AG04450 (cell line): ENCODE measurements at regions of chr10 and their contacts with region 1.

Region 1: GRCh38 chr10:13776861-13777311 is 190.1 kb downstream of the PRPF18 start:
- DNase-seq: no peak
- H3K4me3 ChIP-seq: no peak overlapping the region
- H3K27ac ChIP-seq: no peak overlapping the region
- H3K27me3 ChIP-seq: no peaks in the 10 kb centered on the region
- CTCF ChIP-seq: no peak

Region 2: DNA sequence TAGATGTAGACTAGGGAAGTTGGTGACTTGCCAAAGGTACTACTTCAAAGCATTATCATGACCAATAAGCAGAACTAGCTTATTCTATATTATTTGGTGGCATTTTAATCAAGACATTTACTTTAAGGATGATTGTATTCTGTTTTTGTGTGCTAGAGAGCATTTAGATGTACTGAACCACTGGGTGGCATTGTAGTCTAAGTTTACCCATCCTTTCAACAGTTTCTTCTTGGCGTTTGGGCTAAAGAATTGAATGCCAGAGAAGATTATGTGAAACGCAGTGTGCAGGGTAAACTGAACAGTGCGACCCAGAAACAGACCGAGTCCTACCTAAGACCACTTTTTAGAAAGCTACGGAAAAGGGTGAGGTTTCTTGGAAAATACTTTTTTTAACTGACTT is 163.4 kb before region 1 on chr10:
- CTCF ChIA-PET with region 1: interaction called, 39 read pairs
- POLR2A ChIA-PET with region 1: no interaction called
- DNase-seq: no peak
- H3K4me3 ChIP-seq: no peak overlapping the region
- H3K27ac ChIP-seq: no peak overlapping the region
- H3K27me3 ChIP-seq: no peaks in the 10 kb centered on the region
- CTCF ChIP-seq: peak; percentile 56

Region 3: GRCh38 chr10:13659897-13660550 is 116.9 kb before region 1 on chr10:
- CTCF ChIA-PET with region 1: interaction called, 19 read pairs
- POLR2A ChIA-PET with region 1: no interaction called
- DNase-seq: peak; percentile 21
- H3K4me3 ChIP-seq: no peak overlapping the region
- H3K27ac ChIP-seq: peak overlapping the region; percentile 12
- H3K27me3 ChIP-seq: no peaks in the 10 kb centered on the region
- CTCF ChIP-seq: peak; percentile 93